B cell (primary cell): ENCODE measurements at regions of chr5 and their contacts with region 1.

Region 1: DNA sequence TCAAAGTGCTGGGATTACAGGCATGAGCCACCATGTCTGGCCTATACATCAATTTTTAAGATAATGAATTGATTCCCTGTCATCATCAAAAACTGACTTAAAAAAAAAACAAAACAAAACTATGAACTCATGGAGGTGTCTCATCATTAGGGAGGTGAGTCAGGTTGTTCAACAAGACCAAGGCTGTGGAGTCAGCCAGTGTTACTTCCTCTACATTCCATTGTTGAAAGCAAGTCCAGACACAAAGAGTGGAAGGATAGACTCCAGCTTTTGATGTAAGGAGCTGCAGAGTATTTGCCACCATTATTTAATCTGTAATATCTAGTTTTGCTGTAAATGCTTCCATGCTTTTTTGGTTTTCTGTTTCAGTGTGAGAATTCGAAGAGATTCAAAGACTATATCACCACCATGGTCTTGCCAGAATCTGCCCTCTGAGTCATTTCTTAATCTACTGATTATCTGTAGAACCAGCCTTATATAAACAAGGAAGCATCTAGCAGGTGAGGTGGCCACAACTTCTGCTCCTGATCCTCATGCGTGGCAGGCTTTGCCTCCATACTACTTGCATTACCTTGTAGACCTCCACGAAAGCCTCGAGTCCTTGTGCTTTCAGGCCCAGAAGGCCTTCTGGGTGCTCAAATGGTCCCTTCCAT is 156.1 kb downstream of the FGF1 start:
- DNase-seq: no peak
- ATAC-seq: no peak
- H3K4me3 ChIP-seq: no peak overlapping the region
- H3K4me3 Mint-ChIP-seq: no peak overlapping the region
- H3K27ac ChIP-seq: no peak overlapping the region
- H3K27ac Mint-ChIP-seq: no peak overlapping the region
- H3K4me1 ChIP-seq: peaks cover 7 to 10% of the 10 kb centered on the region in 2 donors
- H3K4me1 Mint-ChIP-seq: peaks cover 13% of the 10 kb centered on the region
- H3K27me3 ChIP-seq: no peaks in the 10 kb centered on the region
- H3K27me3 Mint-ChIP-seq: peaks cover 3% of the 10 kb centered on the region
- CTCF ChIP-seq: no peak

Region 2: DNA sequence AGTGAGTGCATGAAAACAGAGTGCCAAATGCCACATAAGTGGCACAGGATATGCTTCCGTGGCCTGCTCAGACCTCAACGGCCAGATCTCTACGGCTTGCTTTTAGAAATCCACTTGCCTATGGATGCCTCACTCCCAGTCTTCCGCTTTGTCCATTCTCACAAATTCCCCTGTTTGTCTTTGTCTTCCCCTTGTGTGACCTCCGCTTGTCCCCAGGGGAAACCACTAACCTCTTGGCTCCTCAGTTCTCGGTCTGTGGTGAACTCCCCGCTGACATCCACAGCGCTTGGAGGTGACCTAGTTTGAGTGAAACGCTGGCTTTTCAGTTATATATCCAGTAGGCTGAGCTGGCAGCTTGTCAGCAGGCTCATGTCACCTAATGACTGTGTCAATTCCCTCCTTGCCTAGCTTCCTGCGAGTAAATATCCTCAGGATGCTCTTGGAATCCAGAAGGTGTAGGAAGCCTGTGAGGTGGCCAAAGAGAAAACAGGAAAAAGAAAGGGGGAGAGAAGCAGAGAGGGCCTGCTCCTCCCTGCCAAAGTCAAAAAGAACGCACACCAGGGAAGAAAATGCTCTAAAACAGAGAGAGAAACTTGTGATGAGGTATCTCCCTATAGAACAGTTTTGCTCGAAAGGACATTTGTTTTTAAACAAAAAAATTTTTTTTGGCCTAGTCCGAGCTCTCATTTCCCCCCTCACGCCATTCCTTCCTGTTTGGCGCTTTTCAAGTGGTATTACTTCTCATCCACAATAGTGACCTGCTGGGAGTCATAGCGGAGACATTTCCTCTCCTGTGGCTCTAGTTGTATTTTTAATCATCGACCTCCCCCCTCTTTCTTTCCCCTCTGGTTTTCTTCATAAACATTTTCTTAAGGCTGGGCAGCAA is 103.4 kb before region 1 on chr5:
- CTCF ChIA-PET with region 1: no interaction called
- POLR2A ChIA-PET with region 1: interaction called, 14 read pairs
- intact Hi-C with region 1: no loop called
- DNase-seq: no peak
- ATAC-seq: no peak
- H3K4me3 ChIP-seq: no peak overlapping the region
- H3K4me3 Mint-ChIP-seq: no peak overlapping the region
- H3K27ac ChIP-seq: no peak overlapping the region
- H3K27ac Mint-ChIP-seq: no peak overlapping the region
- H3K4me1 ChIP-seq: peaks cover 21 to 24% of the 10 kb centered on the region in 2 donors
- H3K4me1 Mint-ChIP-seq: peaks cover 27% of the 10 kb centered on the region
- H3K27me3 ChIP-seq: peaks cover 0 to 7% (median 0%) of the 10 kb centered on the region in 4 experiments
- H3K27me3 Mint-ChIP-seq: no peaks in the 10 kb centered on the region
- CTCF ChIP-seq: no peak

Region 3: GRCh38 chr5:142540922-142541422 is 11.2 kb after region 1 on chr5:
- CTCF ChIA-PET with region 1: no interaction called
- POLR2A ChIA-PET with region 1: no interaction called
- intact Hi-C with region 1: no loop called
- DNase-seq: no peak
- ATAC-seq: no peak
- H3K4me3 ChIP-seq: no peak overlapping the region
- H3K4me3 Mint-ChIP-seq: no peak overlapping the region
- H3K27ac ChIP-seq: no peak overlapping the region
- H3K27ac Mint-ChIP-seq: no peak overlapping the region
- H3K4me1 ChIP-seq: no peaks in the 10 kb centered on the region
- H3K4me1 Mint-ChIP-seq: no peaks in the 10 kb centered on the region
- H3K27me3 ChIP-seq: peaks cover 0 to 5% (median 0%) of the 10 kb centered on the region in 4 experiments
- H3K27me3 Mint-ChIP-seq: peaks cover 34% of the 10 kb centered on the region
- CTCF ChIP-seq: no peak

Region 4: DNA sequence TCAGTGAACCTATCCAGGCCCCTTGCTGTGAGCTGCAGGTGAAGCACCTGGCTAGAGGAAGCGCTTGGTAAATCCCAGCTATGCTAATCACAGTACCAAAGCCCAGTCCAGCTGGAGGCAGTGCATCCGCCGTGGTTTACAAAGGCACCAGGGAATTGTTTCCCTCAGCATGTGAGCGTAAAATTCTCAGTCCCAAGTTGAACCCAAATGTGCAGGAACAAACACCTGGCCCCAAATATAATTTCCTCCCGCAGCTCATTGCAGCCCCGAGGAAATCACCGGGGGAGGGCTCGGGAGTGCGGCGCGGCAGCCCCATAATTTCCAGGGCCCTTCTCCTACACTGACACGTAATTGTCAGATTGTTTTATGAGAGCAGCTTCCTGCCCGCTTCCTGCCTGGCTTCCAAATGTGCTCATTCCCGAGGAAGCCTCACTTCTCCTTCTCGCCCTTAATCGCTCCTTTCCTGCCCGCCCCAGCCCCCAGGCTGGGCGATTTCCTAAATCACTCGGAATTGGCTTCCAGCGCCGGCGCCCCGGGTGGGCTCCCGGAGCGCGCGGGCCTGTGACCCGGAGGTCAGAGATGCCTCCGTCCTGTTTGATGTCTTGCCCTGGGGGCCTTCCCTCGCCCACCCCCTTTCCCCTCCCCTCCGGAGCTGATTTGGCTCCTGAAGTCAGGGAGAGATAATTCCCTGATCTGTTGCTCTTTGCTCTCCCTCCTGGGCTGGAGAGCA is 21.8 kb after region 1 on chr5:
- CTCF ChIA-PET with region 1: no interaction called
- POLR2A ChIA-PET with region 1: no interaction called
- intact Hi-C with region 1: no loop called
- DNase-seq: no peak
- ATAC-seq: no peak
- H3K4me3 ChIP-seq: no peak overlapping the region
- H3K4me3 Mint-ChIP-seq: no peak overlapping the region
- H3K27ac ChIP-seq: no peak overlapping the region
- H3K27ac Mint-ChIP-seq: no peak overlapping the region
- H3K4me1 ChIP-seq: peaks cover 5 to 9% of the 10 kb centered on the region in 2 donors
- H3K4me1 Mint-ChIP-seq: peaks cover 8% of the 10 kb centered on the region
- H3K27me3 ChIP-seq: peaks cover 0 to 31% (median 21%) of the 10 kb centered on the region in 4 experiments
- H3K27me3 Mint-ChIP-seq: peaks cover 47% of the 10 kb centered on the region
- CTCF ChIP-seq: no peak